A673 (cell line): ENCODE measurements at regions of chr2 and their contacts with region 1.

Region 1: GRCh38 chr2:75787532-75788132 is 76.9 kb upstream of the GCFC2 start:
- DNase-seq: peak; percentile 77
- H3K4me3 ChIP-seq: no peak overlapping the region
- H3K27ac ChIP-seq: no peak overlapping the region
- H3K4me1 ChIP-seq: no peaks in the 10 kb centered on the region
- H3K27me3 ChIP-seq: no peaks in the 10 kb centered on the region
- CTCF ChIP-seq: peak; percentile 68

Region 2: DNA sequence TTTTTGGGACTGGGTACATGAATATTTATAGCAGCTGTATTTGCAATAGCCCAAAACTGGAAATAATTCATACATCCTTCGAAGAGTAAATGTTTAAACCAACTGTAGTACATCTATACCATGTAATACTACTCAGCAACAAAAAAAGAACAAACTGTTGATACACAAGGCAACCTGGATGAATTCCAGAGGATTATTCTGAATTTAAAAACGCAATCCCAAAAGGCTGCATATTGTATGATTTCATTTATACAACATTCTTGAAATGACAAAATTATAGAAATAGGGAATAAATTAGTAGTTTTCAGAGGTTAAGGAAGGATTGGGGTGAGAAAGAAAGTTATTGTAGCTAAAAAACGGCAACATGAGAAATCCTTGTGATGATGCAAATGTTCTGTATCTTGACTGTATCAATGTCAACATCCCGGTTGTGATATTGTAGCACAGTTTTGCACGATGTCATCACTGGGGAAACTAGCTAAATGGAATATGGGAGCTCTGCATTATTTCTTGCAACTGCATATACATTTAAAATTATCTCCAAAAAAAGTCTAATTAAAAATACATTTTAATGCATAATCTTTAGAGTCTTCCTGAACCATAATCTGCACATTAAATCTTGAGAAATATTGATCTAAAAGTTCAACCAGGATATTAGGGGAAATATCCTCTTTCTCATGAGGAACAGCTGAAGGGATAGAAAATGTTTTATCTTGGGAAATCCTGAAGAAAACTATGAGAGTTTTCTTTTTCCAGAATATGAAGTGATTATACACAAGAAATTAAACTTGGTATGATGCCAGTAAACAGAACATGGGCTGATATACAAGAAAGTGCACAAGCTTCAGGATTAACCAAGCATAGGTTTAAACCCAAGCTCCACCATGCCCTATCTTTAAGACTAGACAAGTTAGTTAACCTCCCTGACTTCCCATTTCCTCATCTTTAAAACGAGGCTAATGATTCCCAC is 248.8 kb before region 1 on chr2:
- CTCF ChIA-PET with region 1: no interaction called
- POLR2A ChIA-PET with region 1: no interaction called
- intact Hi-C with region 1: no loop called
- DNase-seq: no peak
- H3K4me3 ChIP-seq: no peak overlapping the region
- H3K27ac ChIP-seq: no peak overlapping the region
- H3K4me1 ChIP-seq: no peaks in the 10 kb centered on the region
- H3K27me3 ChIP-seq: no peaks in the 10 kb centered on the region
- CTCF ChIP-seq: no peak

Region 3: DNA sequence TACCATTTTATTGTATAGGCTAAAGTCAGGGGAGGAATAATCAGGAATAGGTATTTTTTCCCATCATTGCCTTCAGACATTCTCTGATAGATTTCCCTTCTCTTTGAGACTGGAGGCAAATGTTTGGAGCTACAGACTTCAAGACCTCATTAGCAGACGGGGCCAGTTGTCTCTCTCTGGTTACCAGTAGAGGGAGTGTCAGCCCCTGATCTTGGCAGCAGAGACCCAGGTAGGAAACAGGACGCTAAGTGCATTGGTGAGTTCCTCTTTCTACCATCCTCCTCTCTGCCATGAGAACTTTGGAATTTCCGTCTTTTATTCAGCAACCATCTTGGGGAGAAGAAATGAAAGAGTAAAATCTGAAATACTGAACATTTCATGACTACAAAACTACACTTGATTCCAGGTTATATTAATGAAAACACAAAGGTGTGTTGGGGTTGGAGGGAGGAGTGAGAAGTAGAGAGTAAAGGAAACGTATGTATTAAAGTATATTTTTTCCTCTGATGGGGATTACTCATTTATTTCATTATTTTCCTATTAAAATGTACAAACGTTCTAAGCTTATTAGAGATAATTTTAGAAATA is 109.2 kb after region 1 on chr2:
- CTCF ChIA-PET with region 1: no interaction called
- POLR2A ChIA-PET with region 1: no interaction called
- intact Hi-C with region 1: loop called (anchors 5 kb)
- DNase-seq: peak; percentile 73
- H3K4me3 ChIP-seq: no peak overlapping the region
- H3K27ac ChIP-seq: no peak overlapping the region
- H3K4me1 ChIP-seq: no peaks in the 10 kb centered on the region
- H3K27me3 ChIP-seq: no peaks in the 10 kb centered on the region
- CTCF ChIP-seq: peak; percentile 78

Region 4: GRCh38 chr2:75994759-75995158 is 207.1 kb after region 1 on chr2:
- CTCF ChIA-PET with region 1: no interaction called
- POLR2A ChIA-PET with region 1: no interaction called
- intact Hi-C with region 1: loop called (anchors 5 kb)
- DNase-seq: peak; percentile 40
- H3K4me3 ChIP-seq: no peak overlapping the region
- H3K27ac ChIP-seq: no peak overlapping the region
- H3K4me1 ChIP-seq: no peaks in the 10 kb centered on the region
- H3K27me3 ChIP-seq: no peaks in the 10 kb centered on the region
- CTCF ChIP-seq: peak; percentile 45

Region 5: GRCh38 chr2:76197842-76198448 is 410.3 kb after region 1 on chr2:
- CTCF ChIA-PET with region 1: no interaction called
- POLR2A ChIA-PET with region 1: no interaction called
- intact Hi-C with region 1: loop called (anchors 5 kb)
- DNase-seq: peak; percentile 87
- H3K4me3 ChIP-seq: no peak overlapping the region
- H3K27ac ChIP-seq: no peak overlapping the region
- H3K4me1 ChIP-seq: peaks cover 7% of the 10 kb centered on the region
- H3K27me3 ChIP-seq: no peaks in the 10 kb centered on the region
- CTCF ChIP-seq: peak; percentile 77

Region 6: DNA sequence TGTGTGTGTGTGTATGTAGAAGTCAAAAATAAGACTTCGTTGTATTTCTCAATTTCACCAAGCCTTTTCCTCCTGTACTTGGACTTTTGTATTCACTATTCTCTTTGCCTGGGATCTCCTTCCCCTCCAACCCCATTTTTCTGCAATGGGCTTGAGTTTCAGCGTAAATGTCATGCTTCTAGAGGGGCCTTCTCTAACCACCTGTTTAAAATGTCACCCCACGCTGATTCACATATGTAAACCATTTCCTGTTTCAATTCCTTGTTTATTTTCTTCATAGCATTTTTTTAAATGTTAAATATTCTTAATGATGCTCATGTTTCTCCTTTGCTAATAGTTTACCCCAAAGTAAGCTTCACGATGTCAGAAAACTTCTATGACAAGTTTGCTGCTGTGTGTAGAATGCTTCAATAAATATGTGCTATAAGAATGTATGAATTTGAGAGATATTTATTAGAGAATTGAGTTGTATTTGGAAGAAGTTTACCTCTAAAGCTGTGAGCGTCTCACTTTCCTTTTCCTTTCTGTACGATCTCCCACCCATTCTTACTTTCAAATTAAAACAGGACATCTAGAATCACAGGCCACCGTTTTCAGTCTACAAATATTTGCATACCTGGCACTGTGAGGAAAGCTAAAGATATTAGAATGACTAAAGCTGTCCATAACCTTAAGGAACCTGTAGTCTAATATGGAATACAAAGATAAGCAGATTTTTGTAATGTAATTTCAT is 972.2 kb after region 1 on chr2:
- CTCF ChIA-PET with region 1: no interaction called
- POLR2A ChIA-PET with region 1: no interaction called
- intact Hi-C with region 1: no loop called
- DNase-seq: no peak
- H3K4me3 ChIP-seq: no peak overlapping the region
- H3K27ac ChIP-seq: no peak overlapping the region
- H3K4me1 ChIP-seq: no peaks in the 10 kb centered on the region
- H3K27me3 ChIP-seq: no peaks in the 10 kb centered on the region
- CTCF ChIP-seq: no peak